Esophagus muscularis mucosa (tissue), 4 donors: ENCODE measurements at regions of chr11 and their contacts with region 1.

Region 1: DNA sequence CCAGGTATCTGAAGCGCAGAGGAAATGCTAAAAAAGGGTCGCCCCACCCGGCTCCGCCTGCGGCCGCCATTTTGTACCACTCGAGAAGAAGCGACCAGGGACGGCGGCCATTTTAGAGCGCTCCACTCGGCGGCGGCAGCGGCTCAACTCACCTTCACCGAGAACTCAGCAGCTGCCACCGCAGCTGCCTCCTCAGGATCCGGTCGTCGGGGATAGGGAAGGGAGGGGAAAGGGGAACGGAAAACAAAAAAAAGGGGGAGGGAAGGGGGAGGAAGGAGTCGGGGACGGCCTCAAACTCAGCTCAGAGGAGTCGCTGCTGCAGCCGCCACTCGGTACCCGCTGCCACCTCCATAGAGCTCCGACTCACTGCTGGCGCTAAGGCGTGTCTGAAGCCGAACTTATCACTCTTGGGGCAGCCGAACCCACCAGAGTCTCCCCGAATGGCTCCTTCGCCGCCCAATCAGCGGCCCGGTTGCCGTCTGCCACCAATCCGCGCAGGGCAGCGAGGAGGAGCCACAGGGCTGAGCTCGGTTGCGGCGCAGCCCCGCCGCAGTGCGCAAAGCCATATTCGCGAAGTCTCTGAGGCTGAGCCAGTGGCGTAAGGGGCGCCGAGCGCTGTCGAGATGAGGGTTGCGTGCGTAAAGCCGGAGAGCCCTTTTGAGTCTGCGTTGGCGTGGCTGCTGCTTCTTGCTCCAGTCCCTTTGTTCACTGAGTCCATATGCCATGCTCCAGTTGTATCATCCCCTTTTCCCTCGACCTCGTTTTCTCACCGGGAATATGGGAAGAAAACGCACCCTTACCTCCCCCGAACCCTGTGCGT is at the start of gene EIF4G2:
- DNase-seq: peak; percentile 99
- H3K4me3 ChIP-seq: peak within 1 kb of the TSS; percentile 61 to 96 (median 94)
- H3K27ac ChIP-seq: peak within 1 kb of the TSS; percentile 88 to 99 (median 99)
- H3K4me1 ChIP-seq: peaks cover 38 to 45% (median 43%) of the 10 kb centered on the region in 4 donors
- H3K27me3 ChIP-seq: no peaks in the 10 kb centered on the region
- CTCF ChIP-seq: no peak
- EP300 ChIP-seq: no peak
- POLR2A ChIP-seq: peak; percentile 98
- total RNA-seq, gene EIF4G2: 508 to 734 (median 592) TPM

Region 2: GRCh38 chr11:10857709-10858438 is 49.1 kb after region 1 on chr11 and contains the start of gene ZBED5:
- intact Hi-C with region 1: loop called (anchors 2 kb)
- DNase-seq: peak; percentile 99
- H3K4me3 ChIP-seq: peak within 1 kb of the TSS; percentile 67 to 79 (median 78)
- H3K27ac ChIP-seq: peak within 1 kb of the TSS; percentile 91 to 99 (median 94)
- H3K4me1 ChIP-seq: peaks cover 17 to 52% (median 45%) of the 10 kb centered on the region in 4 donors
- H3K27me3 ChIP-seq: no peaks in the 10 kb centered on the region
- CTCF ChIP-seq: peak in 1 of 3 experiments; percentile 24
- EP300 ChIP-seq: no peak
- POLR2A ChIP-seq: peak; percentile 81
- total RNA-seq, gene ZBED5: 27.3 to 36.5 (median 28.3) TPM